Posterior vena cava (tissue), 2 donors: ENCODE measurements at regions of chr6 and their contacts with region 1.

Region 1: GRCh38 chr6:1604158-1605030 is 5.3 kb upstream of the FOXC1 start:
- DNase-seq: peak; percentile 89

Region 2: GRCh38 chr6:2103644-2104523 is 499.5 kb after region 1 on chr6:
- intact Hi-C with region 1: loop called (anchors 5 kb)
- DNase-seq: no peak

Region 3: GRCh38 chr6:2196079-2196679 is 591.8 kb after region 1 on chr6:
- intact Hi-C with region 1: loop called in 1 of 2 experiments (anchors 5 kb)
- DNase-seq: no peak

Region 4: GRCh38 chr6:2353412-2354137 is 749.2 kb after region 1 on chr6:
- intact Hi-C with region 1: loop called (anchors 5 to 10 kb)
- DNase-seq: no peak